ENCODE measurements at regions of chr18 and their contacts with region 1.

Region 1: DNA sequence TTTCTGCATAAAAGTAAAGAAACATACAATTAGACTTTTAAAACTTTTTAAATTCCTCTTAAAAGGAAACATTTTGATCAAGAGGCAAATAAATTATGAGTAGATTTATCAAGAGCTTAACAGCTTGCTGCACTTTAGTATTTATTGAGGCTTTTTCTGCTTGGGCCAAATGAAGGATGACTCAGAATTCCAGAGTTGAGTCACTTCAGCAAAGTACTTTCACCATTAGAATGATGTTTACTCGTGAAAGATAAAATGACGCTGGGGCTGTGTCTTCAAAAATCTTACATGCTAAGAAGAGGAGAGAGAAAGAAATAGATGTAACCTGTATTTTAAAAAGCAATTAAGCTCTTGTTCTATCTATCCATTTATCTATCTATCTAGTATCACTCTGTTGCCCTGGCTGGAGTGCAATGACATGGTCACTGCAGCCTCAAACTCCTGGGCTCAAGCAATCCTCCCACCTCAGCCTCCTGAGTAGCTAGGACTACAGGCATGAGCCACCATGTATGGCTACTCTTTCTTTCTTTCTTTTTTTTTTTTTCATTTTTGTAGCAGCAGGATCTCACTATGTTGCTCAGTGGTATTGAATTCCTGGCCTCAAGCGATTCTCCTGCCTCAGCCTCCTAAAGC is 75.3 kb upstream of the RIOK3 start:
- DNase-seq: no peak
- H3K4me3 ChIP-seq: no peak overlapping the region
- H3K27ac ChIP-seq: peak overlapping the region; percentile 75 to 82 (median 78)
- H3K4me1 ChIP-seq: peaks cover 11 to 30% (median 21%) of the 10 kb centered on the region in 4 donors
- H3K27me3 ChIP-seq: no peaks in the 10 kb centered on the region
- CTCF ChIP-seq: no peak
- EP300 ChIP-seq: no peak
- POLR2A ChIP-seq: no peak

Region 2: DNA sequence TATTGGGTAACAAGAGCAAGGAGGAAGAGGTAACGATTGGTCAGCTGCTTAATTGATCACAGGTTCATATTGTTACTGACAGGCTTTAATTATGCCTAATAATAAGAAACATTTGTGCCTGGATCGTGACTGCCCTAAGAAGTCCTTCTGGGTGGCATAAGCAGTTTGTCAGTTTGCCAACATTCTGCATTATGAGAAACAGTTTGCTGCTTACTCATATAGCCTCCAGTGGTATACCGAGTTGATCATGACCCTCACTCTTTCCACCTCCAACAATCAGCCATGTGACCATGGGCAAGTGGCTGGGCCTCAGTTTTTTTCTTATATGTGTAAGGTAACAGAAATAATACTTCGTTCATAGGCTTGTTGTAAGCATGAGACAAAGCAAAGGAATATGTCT is 339.1 kb before region 1 on chr18:
- intact Hi-C with region 1: loop called (anchors 5 kb)
- DNase-seq: no peak
- H3K4me3 ChIP-seq: no peak overlapping the region
- H3K27ac ChIP-seq: no peak overlapping the region
- H3K4me1 ChIP-seq: no peaks in the 10 kb centered on the region
- H3K27me3 ChIP-seq: no peaks in the 10 kb centered on the region
- CTCF ChIP-seq: no peak
- EP300 ChIP-seq: no peak
- POLR2A ChIP-seq: no peak

Region 3: GRCh38 chr18:23503038-23503962 is 125.5 kb after region 1 on chr18 and contains the start of gene RMC1:
- intact Hi-C with region 1: no loop called
- DNase-seq: peak; percentile 98
- H3K4me3 ChIP-seq: peak within 1 kb of the TSS; percentile 93 to 98 (median 96)
- H3K27ac ChIP-seq: peak within 1 kb of the TSS; percentile 88 to 97 (median 92)
- H3K4me1 ChIP-seq: peaks cover 19 to 64% (median 61%) of the 10 kb centered on the region in 4 donors
- H3K27me3 ChIP-seq: no peaks in the 10 kb centered on the region
- CTCF ChIP-seq: peak in 1 of 3 experiments; percentile 37
- EP300 ChIP-seq: no peak
- POLR2A ChIP-seq: peak; percentile 76
- total RNA-seq, gene RMC1: 24.9 to 41.0 (median 31.0) TPM